Esophagus muscularis mucosa (tissue), 4 donors: ENCODE measurements at regions of chr2 and their contacts with region 1.

Region 1: GRCh38 chr2:180980106-180980942 is at the start of gene UBE2E3:
- DNase-seq: peak; percentile 94
- H3K4me3 ChIP-seq: peak within 1 kb of the TSS; percentile 77 to 86 (median 82)
- H3K27ac ChIP-seq: peak within 1 kb of the TSS; percentile 92 to 94 (median 92)
- H3K4me1 ChIP-seq: peaks cover 41 to 48% (median 47%) of the 10 kb centered on the region in 4 donors
- H3K27me3 ChIP-seq: no peaks in the 10 kb centered on the region
- CTCF ChIP-seq: peak; percentile 71 to 87 (median 74)
- EP300 ChIP-seq: no peak
- POLR2A ChIP-seq: no peak
- total RNA-seq, gene UBE2E3: 32.8 to 57.7 (median 40.2) TPM

Region 2: DNA sequence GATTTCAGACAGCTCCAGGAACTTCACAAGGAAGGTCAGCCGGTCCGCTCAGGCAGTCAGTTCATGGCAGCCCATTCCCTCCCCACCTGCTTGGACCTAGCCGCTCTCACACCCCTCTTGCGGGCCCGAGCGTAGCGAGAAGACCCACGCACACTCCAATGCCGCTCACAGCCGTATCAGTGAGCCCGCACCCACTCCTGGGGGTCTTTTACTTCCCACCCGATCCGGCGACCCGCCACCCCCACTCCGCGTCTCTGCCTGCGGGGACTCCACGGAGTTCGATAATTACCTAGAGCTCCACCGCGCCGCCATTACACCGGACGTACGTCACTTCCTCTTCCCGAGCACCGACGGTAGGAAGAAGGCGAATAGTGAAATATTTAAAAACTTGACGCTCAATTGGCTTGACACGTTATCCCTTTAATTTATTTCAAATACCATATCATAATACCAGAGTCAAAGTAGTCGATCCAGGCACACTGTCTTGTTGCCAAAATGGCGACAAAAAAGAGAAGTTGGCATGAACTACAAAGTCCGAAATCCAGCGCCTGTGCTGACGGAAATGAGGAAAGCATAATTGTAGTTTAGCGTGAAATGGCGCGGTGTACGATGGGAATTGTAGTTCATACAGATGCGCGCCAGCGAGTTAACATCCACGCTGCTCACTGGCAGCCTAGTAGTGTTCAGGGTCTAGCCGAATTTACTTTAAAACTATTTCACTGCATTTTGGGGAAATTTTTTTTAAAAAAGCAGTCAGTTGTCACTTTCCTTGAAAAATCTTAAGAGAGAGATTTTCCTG is 973.3 kb before region 1 on chr2 and contains the start of gene CWC22:
- intact Hi-C with region 1: loop called (anchors 5 kb)
- DNase-seq: peak; percentile 98
- H3K4me3 ChIP-seq: peak within 1 kb of the TSS; percentile 70 to 93 (median 82)
- H3K27ac ChIP-seq: peak within 1 kb of the TSS; percentile 83 to 93 (median 88)
- H3K4me1 ChIP-seq: peaks cover 13 to 32% (median 19%) of the 10 kb centered on the region in 4 donors
- H3K27me3 ChIP-seq: no peaks in the 10 kb centered on the region
- CTCF ChIP-seq: no peak
- EP300 ChIP-seq: no peak
- POLR2A ChIP-seq: no peak
- total RNA-seq, gene CWC22: 20.3 to 27.9 (median 25.5) TPM